ENCODE measurements at regions of chr2 and their contacts with region 1.

Region 1: GRCh38 chr2:32010670-32011484 is at the start of gene MEMO1:
- DNase-seq: peak; percentile 96
- ATAC-seq: peak; percentile 91
- total RNA-seq, gene MEMO1: 43.8 TPM

Region 2: DNA sequence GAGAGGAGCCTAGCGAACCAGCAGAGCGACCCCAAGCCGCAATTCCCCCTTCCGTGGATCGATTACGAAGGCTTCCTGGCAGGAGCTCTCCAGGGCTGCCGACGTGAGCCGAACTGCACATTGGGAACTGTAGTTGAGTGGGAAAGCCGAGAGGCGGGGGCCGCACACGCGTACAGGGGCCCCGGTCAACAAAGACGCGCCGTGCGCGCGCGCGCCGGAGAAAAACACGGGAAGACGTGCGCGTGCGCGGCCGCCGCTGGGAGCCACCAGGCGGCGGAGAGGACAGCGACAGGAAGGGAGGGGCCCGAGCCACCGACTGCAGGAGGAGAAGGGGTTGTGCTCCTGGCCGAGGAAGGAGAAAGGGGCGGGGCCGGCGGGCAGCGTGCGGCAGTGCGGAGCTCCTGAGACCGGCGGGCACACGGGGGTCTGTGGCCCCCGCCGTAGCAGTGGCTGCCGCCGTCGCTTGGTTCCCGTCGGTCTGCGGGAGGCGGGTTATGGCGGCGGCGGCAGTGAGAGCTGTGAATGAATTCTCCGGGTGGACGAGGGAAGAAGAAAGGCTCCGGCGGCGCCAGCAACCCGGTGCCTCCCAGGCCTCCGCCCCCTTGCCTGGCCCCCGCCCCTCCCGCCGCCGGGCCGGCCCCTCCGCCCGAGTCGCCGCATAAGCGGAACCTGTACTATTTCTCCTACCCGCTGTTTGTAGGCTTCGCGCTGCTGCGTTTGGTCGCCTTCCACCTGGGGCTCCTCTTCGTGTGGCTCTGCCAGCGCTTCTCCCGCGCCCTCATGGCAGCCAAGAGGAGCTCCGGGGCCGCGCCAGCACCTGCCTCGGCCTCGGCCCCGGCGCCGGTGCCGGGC is 52.7 kb after region 1 on chr2 and contains the start of gene SPAST:
- intact Hi-C with region 1: loop called (anchors 2 kb)
- DNase-seq: peak; percentile 99
- ATAC-seq: peak; percentile 97
- total RNA-seq, gene SPAST: 10.7 TPM